ENCODE measurements at regions of chr10 and their contacts with region 1.

Region 1: GRCh38 chr10:61284222-61284890 is 168.8 kb downstream of the TMEM26 start:
- DNase-seq: peak; percentile 45
- H3K4me3 ChIP-seq: no peak overlapping the region
- H3K27ac ChIP-seq: peak overlapping the region; percentile 15 to 44
- H3K4me1 ChIP-seq: no peaks in the 10 kb centered on the region
- H3K27me3 ChIP-seq: no peaks in the 10 kb centered on the region
- CTCF ChIP-seq: peak; percentile 60 to 88 (median 85)
- POLR2A ChIP-seq: no peak

Region 2: GRCh38 chr10:60444494-60445064 is 839.8 kb before region 1 on chr10:
- intact Hi-C with region 1: loop called (anchors 10 kb)
- DNase-seq: no peak
- H3K4me3 ChIP-seq: no peak overlapping the region
- H3K27ac ChIP-seq: no peak overlapping the region
- H3K4me1 ChIP-seq: no peaks in the 10 kb centered on the region
- H3K27me3 ChIP-seq: no peaks in the 10 kb centered on the region
- CTCF ChIP-seq: peak in 3 of 4 experiments; percentile 38 to 70 (median 65)
- POLR2A ChIP-seq: no peak

Region 3: GRCh38 chr10:60834401-60834800 is 450.0 kb before region 1 on chr10:
- intact Hi-C with region 1: no loop called
- DNase-seq: no peak
- H3K4me3 ChIP-seq: no peak overlapping the region
- H3K27ac ChIP-seq: no peak overlapping the region
- H3K4me1 ChIP-seq: no peaks in the 10 kb centered on the region
- H3K27me3 ChIP-seq: no peaks in the 10 kb centered on the region
- CTCF ChIP-seq: no peak
- POLR2A ChIP-seq: no peak

Region 4: DNA sequence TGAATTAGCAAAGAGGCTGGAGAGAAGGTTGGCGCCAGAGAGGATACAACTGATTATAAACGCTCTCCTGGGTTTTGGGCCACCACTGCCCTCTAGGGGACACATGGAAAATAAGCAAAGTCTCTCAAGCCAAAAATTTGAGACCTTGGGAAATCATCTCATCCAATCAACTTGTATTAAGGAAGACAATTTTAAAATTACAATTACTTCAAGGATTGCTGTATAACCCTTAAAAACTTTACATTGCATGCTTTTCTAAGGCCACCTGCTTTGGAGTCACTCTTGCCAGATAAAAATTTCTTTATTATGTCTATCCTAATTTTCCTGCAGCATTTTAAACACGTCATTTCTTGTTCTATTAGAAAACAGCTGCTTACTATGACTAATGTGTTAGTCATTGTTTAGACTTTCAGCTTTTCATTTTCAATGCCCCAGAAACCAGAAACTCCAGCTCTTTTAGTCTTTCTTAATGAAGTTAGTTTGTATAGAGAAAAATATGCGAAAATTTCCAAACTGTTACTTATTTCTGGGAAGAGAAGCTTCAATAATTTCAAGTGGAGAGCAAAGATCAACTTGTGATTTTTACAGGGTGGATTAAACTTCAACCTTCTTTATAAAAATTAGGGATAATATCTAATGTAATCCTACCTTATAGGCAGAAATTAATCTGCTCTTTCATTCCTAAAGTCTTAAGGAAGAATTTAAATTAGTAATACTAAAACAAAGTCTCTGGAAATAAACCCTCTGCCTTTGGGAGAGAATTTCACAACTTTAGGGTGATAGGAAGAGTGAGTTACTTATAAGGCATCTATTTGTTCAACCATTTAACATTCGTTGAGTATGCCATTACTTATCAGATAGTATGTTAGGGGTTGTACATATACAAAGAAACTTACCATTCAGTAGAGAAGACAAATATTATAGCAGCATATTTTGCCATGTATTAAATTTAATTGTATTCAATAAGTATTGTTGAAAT is 319.8 kb before region 1 on chr10:
- intact Hi-C with region 1: loop called (anchors 10 kb)
- DNase-seq: peak; percentile 61
- H3K4me3 ChIP-seq: no peak overlapping the region
- H3K27ac ChIP-seq: peak overlapping the region in 1 of 2 donors; percentile 16
- H3K4me1 ChIP-seq: peaks cover 4% of the 10 kb centered on the region
- H3K27me3 ChIP-seq: no peaks in the 10 kb centered on the region
- CTCF ChIP-seq: peak; percentile 46 to 76 (median 72)
- POLR2A ChIP-seq: no peak

Region 5: GRCh38 chr10:61135276-61135721 is 149.1 kb before region 1 on chr10:
- intact Hi-C with region 1: loop called (anchors 5 kb)
- DNase-seq: no peak
- H3K4me3 ChIP-seq: no peak overlapping the region
- H3K27ac ChIP-seq: no peak overlapping the region
- H3K4me1 ChIP-seq: no peaks in the 10 kb centered on the region
- H3K27me3 ChIP-seq: no peaks in the 10 kb centered on the region
- CTCF ChIP-seq: no peak
- POLR2A ChIP-seq: no peak

Region 6: GRCh38 chr10:61733358-61733940 is 449.1 kb after region 1 on chr10:
- intact Hi-C with region 1: loop called (anchors 10 kb)
- DNase-seq: peak; percentile 51
- H3K4me3 ChIP-seq: no peak overlapping the region
- H3K27ac ChIP-seq: no peak overlapping the region
- H3K4me1 ChIP-seq: no peaks in the 10 kb centered on the region
- H3K27me3 ChIP-seq: no peaks in the 10 kb centered on the region
- CTCF ChIP-seq: peak; percentile 11 to 73 (median 62)
- POLR2A ChIP-seq: no peak